Pancreas (tissue), 10 donors: ENCODE measurements at regions of chr10 and their contacts with region 1.

Region 1: DNA sequence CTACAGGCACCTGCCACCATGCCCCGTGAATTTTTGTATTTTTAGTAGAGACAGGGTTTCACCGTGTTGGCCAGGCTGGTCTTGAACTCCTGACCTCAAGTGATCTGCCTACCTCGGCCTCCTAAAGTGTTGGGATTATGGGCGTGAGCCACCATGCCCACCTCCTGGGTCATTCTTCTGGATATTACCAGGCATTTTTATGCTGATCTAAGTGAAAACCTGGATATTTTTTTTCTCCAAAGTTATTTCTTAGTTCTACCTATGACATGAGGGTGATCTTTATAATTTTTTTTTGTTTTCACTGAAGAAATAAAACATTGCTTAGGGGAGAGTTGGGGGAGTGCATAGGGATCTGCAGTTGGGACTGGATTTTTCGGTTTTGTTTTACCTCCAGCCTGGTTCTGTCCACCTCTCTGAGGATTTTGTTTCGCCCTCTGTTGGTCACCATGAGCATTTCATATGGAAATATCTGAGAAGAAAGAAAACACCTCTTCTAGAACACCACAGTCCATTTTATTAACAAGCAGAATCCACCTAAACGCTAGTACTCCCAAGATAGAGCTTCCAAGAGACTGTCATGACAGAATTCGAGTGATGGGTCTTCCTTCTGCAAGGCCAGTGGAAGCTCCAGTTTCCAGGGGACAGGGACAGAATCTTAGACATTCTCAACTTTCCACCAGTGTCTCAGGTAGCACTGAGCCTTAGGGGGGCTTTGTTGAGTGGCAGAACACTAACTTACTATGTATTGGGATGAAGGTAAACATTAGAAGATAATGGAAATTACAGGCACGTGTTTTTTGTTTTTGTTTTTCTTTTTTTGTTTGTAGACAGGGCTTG is 33.4 kb upstream of the AFAP1L2 start:
- DNase-seq: peak in 1 of 6 donors; percentile 16
- ATAC-seq: peak; percentile 58 to 89 (median 74)
- H3K4me3 ChIP-seq: no peak overlapping the region
- H3K27ac ChIP-seq: no peak overlapping the region
- H3K4me1 ChIP-seq: no peaks in the 10 kb centered on the region
- H3K27me3 ChIP-seq: no peaks in the 10 kb centered on the region
- CTCF ChIP-seq: peak; percentile 26 to 46 (median 34)

Region 2: DNA sequence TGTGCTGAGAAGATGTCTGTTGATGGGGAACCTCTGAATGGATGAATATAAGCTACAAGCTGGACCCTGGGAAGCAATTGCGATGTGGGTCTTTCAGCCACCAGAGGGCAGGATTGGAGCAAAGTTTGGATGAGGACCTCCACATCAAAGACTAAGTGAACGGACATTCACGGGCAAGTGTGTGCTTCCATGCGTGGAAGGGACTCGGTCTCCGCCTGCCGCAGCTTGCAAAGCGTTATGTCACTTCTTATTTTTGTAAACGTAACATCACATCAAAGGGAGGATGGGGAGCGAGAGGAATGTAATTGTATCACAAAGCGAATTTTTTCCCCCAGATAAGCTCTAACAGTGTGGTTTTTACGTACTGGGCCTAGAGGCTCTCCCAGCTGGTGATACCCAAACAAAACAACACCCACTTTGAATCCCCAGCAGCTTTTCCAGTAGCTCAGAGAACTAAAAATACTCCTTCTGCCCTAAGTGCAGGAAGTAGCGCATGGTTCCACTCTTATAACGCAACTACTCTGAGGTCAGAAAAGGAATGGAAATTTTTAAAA is 133.6 kb before region 1 on chr10:
- intact Hi-C with region 1: loop called in 1 of 3 experiments (anchors 5 kb)
- DNase-seq: peak in 5 of 6 donors; percentile 59 to 84 (median 74)
- ATAC-seq: peak; percentile 87 to 95 (median 91)
- H3K4me3 ChIP-seq: peak overlapping the region in 2 of 4 donors; percentile 30 to 38
- H3K27ac ChIP-seq: no peak overlapping the region
- H3K4me1 ChIP-seq: no peaks in the 10 kb centered on the region
- H3K27me3 ChIP-seq: no peaks in the 10 kb centered on the region
- CTCF ChIP-seq: peak; percentile 66 to 74 (median 70)

Region 3: DNA sequence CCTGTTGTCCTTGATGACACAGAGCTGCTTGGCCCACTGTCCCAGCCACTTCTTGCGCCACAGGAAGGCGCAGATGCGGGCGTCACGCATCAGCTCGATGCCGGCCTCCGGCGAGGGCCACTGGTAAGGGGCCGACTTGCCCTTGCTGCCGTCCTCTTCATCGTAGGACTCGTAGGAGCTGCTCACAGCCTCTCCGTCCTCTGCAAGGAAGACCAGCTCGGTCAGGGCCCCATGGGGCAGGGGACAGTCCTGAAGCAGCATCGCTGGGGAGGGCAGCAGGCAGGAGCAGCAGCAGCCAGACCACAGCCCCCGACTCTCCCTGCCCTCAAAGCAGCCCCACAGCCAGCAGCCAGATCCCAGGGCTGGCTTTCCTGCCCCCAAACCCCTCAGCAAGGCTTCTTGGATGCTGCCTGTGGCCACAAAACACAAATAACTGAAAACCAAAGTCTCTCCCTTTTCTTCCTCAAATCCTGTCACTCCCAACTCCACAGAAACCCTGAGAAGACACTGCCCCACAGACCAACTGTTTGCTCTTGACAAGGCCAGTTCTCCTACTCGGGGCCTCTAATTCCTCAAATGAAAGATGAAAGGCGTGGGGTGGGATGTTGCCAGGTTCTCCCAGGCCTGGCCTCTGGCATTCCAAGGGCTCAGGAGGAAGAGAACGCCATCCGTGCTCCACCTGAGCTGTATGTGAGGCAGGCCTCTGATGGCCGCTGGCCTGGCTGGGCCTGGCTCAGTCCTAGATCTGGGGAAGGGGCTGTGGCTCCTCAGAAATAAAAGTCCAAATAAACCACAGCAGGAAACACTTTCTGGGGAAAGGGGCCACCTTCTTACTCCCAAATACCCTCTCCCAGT is 121.9 kb before region 1 on chr10:
- intact Hi-C with region 1: loop called in 1 of 3 experiments (anchors 10 kb)
- DNase-seq: peak in 1 of 6 donors; percentile 53
- ATAC-seq: no peak
- H3K4me3 ChIP-seq: no peak overlapping the region
- H3K27ac ChIP-seq: no peak overlapping the region
- H3K4me1 ChIP-seq: no peaks in the 10 kb centered on the region
- H3K27me3 ChIP-seq: no peaks in the 10 kb centered on the region
- CTCF ChIP-seq: no peak